ENCODE measurements at regions of chr20 and their contacts with region 1.

Region 1: DNA sequence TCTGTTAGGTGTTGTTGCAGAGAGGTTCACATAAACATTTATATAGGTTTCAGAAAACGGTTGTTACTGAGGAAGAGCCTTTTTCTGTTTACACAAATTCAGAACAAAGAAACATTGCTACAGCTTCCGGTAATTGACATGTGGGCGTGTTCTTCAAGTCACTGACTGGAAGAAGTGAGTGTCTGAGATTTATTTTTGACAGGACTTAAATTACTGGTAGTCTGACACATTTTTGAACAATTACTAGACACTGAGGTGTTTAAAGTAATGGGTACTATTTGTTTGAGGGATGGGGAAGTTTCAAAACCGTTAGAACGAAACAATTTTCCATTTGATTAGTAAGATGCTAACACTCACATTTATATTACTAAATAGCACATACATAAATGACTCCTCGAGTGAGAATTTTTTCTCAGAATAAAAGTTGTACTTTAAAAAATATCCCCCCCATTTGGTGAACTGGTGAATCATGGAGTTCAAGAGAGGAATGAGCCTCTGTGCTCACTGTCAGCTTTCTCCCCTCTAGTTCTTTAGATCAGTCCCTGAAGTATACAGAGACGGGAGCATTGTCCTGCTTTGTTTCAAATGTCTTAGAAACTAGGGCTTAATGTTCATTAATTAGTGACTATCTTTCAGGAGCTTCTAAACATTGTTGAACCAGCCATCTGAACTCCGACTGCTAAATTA is 98.7 kb downstream of the TSHZ2 start:
- DNase-seq: peak; percentile 19
- H3K4me3 Mint-ChIP-seq: peak overlapping the region; percentile 10
- H3K27ac Mint-ChIP-seq: peak overlapping the region; percentile 74
- H3K4me1 Mint-ChIP-seq: peaks cover 53% of the 10 kb centered on the region
- H3K27me3 Mint-ChIP-seq: peaks cover 2% of the 10 kb centered on the region

Region 2: DNA sequence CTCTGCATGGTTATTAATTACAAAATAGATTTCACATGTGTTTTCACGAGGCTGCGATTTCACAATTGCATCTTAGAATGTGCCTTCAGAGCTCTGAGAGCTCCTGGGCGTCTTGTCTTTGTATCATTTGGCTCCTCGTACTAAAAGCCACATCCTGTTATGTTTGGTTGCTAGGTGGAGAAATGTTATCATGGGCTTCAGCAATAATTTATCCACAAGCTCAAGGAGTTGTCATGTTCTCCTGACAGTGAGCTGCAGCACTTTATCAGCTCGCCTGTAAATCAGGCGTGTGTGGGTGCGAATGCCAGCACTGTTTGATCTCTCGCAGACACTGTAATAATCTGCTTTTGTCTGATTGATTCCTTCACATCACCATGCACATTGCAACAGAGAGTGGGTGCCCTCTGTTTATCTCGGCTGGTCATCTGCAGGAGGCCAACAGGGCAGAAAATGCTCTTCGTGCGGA is 660.6 kb before region 1 on chr20:
- intact Hi-C with region 1: loop called (anchors 5 kb)
- DNase-seq: peak; percentile 38
- H3K4me3 Mint-ChIP-seq: peak overlapping the region; percentile 53
- H3K27ac Mint-ChIP-seq: peak overlapping the region; percentile 66
- H3K4me1 Mint-ChIP-seq: peaks cover 43% of the 10 kb centered on the region
- H3K27me3 Mint-ChIP-seq: no peaks in the 10 kb centered on the region

Region 3: GRCh38 chr20:52880259-52880658 is 190.6 kb before region 1 on chr20:
- intact Hi-C with region 1: no loop called
- DNase-seq: no peak
- H3K4me3 Mint-ChIP-seq: no peak overlapping the region
- H3K27ac Mint-ChIP-seq: no peak overlapping the region
- H3K4me1 Mint-ChIP-seq: no peaks in the 10 kb centered on the region
- H3K27me3 Mint-ChIP-seq: peaks cover 4% of the 10 kb centered on the region

Region 4: DNA sequence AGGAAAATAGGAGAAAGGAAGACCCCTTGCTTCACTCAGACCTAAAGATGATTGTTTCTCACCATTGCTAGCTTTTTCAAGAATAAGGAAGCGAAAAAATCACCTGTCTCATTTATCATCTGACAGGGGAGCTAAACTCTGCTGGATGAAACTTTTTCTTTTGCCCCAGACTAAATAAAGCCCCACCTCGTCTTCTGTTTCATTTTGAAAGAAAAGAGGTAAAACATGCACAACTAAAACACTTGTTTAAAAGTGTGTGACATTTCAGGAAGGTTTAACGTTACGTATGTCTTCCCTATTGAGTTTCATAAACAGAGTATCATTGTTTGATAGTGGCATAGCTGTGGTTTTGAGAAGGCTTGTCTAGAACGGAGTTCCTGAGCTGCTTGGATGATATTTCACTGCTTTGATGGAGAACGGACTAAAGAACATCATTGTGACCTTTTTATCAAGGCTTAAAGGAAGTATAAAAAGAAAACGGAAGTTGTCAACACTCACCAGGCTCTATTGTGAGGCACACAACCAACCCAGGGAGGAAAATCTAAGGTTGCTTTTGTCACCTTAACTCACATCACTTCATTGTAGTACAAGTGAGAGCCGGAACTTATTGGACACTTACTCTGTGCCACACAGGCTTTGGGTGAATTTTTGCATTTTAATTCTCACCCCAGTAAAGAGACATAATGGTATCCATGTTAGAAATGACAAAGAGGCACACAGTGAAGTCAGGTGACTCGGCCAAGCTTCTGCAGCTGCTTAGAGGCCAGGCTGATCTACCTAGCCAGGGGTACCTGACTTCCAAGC is 69.1 kb before region 1 on chr20:
- intact Hi-C with region 1: loop called (anchors 1 kb)
- DNase-seq: no peak
- H3K4me3 Mint-ChIP-seq: peak overlapping the region; percentile 79
- H3K27ac Mint-ChIP-seq: peak overlapping the region; percentile 98
- H3K4me1 Mint-ChIP-seq: peaks cover 59% of the 10 kb centered on the region
- H3K27me3 Mint-ChIP-seq: no peaks in the 10 kb centered on the region

Region 5: DNA sequence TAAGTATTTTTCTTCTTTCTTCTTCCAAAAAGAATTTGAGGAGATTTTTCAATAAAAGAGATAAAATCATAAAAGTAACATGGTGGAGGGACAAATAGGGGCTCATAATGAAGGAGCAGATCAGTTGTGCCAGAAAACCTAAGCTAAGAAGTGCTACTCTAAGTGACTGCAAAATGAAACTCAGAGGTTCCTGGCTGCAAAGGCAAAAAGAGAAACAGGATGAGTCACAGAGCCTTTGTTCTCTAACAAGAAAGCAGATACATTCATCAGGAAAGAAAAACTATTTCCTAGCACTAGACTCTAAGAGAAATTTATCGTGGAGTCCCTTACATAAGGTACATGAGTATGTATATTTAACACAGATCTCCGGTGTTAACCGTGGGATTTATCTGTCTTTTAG is 48.9 kb before region 1 on chr20:
- intact Hi-C with region 1: loop called (anchors 1 kb)
- DNase-seq: peak; percentile 33
- H3K4me3 Mint-ChIP-seq: peak overlapping the region; percentile 24
- H3K27ac Mint-ChIP-seq: peak overlapping the region; percentile 90
- H3K4me1 Mint-ChIP-seq: peaks cover 87% of the 10 kb centered on the region
- H3K27me3 Mint-ChIP-seq: no peaks in the 10 kb centered on the region

Region 6: GRCh38 chr20:53032478-53032932 is 38.3 kb before region 1 on chr20:
- intact Hi-C with region 1: loop called (anchors 1 kb)
- DNase-seq: no peak
- H3K4me3 Mint-ChIP-seq: no peak overlapping the region
- H3K27ac Mint-ChIP-seq: no peak overlapping the region
- H3K4me1 Mint-ChIP-seq: peaks cover 63% of the 10 kb centered on the region
- H3K27me3 Mint-ChIP-seq: no peaks in the 10 kb centered on the region

Region 7: DNA sequence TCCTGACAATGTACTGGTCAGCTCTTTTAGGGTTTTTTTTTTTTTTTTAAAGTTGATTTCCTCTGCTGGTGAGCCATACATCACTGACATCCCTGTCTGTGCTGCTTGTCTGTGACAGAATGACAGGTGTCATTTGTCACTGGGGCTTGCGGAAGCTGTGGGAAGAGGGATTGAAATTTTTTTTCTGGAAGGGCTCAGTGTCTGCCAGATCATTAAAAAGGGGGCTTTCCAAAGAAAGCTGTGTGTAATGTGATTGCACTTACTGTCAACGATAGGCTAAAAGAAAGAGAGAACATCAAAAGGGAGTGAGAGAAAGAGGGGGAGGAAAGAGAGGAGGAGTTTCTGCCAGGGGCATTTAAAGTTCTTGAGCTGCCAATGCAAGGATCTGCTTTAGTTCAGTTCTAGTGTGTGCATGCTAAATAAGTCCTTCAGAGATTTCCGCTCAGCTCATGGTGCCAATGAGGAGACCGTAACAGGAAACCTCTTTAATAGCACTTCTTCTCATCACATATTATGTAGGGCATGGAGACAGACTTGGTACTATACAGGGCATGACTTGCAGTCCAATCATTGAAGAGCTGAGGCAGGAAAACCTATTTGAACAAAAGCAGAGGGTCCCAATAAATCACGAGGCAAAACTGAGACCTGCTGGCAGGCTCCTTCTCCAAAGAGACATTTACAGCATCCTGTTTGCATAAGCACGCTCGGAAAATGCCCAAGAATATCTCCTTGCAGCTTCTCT is 78.5 kb after region 1 on chr20:
- intact Hi-C with region 1: loop called (anchors 1 kb)
- DNase-seq: no peak
- H3K4me3 Mint-ChIP-seq: peak overlapping the region; percentile 45
- H3K27ac Mint-ChIP-seq: peak overlapping the region; percentile 75
- H3K4me1 Mint-ChIP-seq: peaks cover 64% of the 10 kb centered on the region
- H3K27me3 Mint-ChIP-seq: no peaks in the 10 kb centered on the region

Region 8: DNA sequence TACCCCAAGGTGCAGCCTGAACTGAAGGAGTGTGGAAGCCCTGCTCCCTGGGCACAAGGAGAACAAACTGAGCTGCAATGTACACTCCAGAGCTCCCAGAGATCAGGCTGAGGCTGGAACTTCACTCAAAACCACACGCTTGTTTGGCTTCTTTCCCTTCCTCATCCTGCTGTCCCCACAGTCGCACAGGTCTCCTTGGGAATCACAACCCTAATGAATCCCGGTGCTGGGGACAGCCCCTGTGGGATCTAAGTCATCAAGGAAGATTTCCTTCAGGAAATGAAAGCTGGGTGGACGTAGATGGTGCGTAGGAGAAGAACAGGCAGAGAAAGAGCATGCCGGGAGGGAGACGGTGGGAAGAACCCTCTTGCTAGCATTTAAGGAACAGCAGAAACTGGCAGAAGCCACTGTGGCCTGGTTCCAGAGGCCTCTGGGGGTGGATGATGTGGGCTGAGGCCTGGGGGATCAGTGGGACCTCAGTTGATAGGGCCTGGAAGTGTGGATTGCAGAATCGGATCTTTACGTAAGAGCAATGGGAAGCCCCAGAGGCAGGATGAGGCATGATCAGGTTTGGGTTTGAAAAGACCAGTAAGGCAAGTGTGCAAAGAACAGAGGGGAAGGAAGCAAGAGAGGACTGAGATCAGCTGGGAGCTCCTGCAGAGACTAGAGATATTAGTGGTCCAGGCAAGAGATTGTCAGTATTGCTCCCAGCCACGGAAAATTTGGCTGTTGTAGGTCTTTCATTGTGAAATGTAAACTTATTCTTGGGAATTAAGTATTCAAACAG is 1081.6 kb after region 1 on chr20:
- intact Hi-C with region 1: no loop called
- DNase-seq: no peak
- H3K4me3 Mint-ChIP-seq: no peak overlapping the region
- H3K27ac Mint-ChIP-seq: no peak overlapping the region
- H3K4me1 Mint-ChIP-seq: no peaks in the 10 kb centered on the region
- H3K27me3 Mint-ChIP-seq: peaks cover 5% of the 10 kb centered on the region